Activated T-helper 1 cell treated with anti-CD3 and anti-CD28 coated beads, Interleukin-12 subunit alpha, Interleukin-12 subunit beta, Interleukin-2, Interleukin-4 antibody, amounts not matched to agents 30 ng/mL and 10 ng/mL and 1 ng/mL, durations not matched to agents 14 hours and 24 hours and 36 hours (primary cell): ENCODE measurements at regions of chr2 and their contacts with region 1.

Region 1: DNA sequence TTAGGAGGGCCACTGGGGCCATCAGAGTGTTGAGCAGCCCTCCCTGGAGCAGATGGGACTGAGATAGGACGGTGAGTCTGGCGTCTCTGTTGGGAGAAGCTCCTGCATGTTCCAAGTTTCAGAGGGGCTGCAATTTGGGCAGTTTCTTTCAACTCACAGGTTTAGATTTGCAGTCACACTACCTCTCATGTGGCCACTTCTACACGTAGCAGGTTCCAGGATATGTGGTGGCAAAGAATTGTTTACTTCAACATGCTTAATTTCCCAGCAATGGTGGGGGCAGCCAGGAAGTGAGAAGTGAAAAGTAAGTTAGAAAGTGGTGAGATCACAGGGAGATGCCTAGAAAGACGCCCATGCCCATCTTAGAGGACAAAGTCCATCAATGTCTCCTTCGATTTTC is 9.3 kb downstream of the NCK2 start:
- DNase-seq: peak; percentile 56
- H3K4me3 Mint-ChIP-seq: peak overlapping the region; percentile 60
- H3K27ac Mint-ChIP-seq: peak overlapping the region; percentile 83
- H3K4me1 Mint-ChIP-seq: peaks cover 97% of the 10 kb centered on the region
- H3K27me3 Mint-ChIP-seq: no peaks in the 10 kb centered on the region

Region 2: GRCh38 chr2:105454801-105455485 is 299.1 kb before region 1 on chr2:
- intact Hi-C with region 1: no loop called
- DNase-seq: no peak
- H3K4me3 Mint-ChIP-seq: no peak overlapping the region
- H3K27ac Mint-ChIP-seq: no peak overlapping the region
- H3K4me1 Mint-ChIP-seq: no peaks in the 10 kb centered on the region
- H3K27me3 Mint-ChIP-seq: peaks cover 3% of the 10 kb centered on the region

Region 3: GRCh38 chr2:105496271-105496670 is 257.7 kb before region 1 on chr2:
- intact Hi-C with region 1: no loop called
- DNase-seq: no peak
- H3K4me3 Mint-ChIP-seq: no peak overlapping the region
- H3K27ac Mint-ChIP-seq: no peak overlapping the region
- H3K4me1 Mint-ChIP-seq: no peaks in the 10 kb centered on the region
- H3K27me3 Mint-ChIP-seq: peaks cover 20% of the 10 kb centered on the region

Region 4: DNA sequence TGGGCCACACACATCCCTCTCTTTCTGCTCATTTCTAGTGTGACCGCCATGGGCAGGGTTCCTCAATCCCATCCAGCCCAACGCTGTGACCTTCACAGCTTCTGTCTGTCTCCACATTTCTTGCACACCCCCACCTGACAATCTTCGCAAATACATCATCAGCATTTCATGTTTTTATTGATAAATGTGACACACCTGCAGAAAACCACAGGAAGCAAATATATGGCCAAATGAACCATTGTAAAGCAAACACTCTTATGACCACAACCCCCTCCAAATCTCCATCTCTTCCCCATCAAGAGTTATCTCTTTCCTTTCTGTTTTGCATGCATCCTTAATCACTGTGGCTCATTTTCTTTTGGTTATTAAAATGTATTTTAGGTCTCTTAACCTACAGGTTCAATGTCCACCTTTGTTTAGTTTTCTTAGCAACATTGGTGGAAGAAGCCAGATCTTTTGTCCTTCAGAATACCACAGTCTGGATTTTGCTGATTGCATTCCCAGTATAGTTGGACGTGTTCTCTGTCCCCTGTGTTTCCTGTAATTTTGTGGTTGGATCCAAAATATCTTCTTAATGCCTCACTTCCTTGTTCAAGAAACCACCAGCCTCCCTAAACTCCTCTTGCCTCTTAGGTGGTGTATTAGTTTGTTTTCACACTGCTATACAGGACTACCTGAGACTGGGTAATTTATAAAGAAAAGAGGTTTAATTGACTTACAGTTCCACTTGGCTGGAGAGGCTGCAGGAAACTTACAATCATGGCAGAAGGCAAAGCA is 19.1 kb before region 1 on chr2:
- intact Hi-C with region 1: loop called (anchors 2 kb)
- DNase-seq: no peak
- H3K4me3 Mint-ChIP-seq: no peak overlapping the region
- H3K27ac Mint-ChIP-seq: no peak overlapping the region
- H3K4me1 Mint-ChIP-seq: peaks cover 42% of the 10 kb centered on the region
- H3K27me3 Mint-ChIP-seq: peaks cover 2% of the 10 kb centered on the region

Region 5: GRCh38 chr2:105769504-105769903 is 15.5 kb after region 1 on chr2:
- intact Hi-C with region 1: loop called (anchors 1 kb)
- DNase-seq: no peak
- H3K4me3 Mint-ChIP-seq: peak overlapping the region; percentile 34
- H3K27ac Mint-ChIP-seq: peak overlapping the region; percentile 64
- H3K4me1 Mint-ChIP-seq: peaks cover 91% of the 10 kb centered on the region
- H3K27me3 Mint-ChIP-seq: no peaks in the 10 kb centered on the region

Region 6: GRCh38 chr2:105775809-105776559 is 22.0 kb after region 1 on chr2:
- intact Hi-C with region 1: loop called (anchors 2 kb)
- DNase-seq: no peak
- H3K4me3 Mint-ChIP-seq: peak overlapping the region; percentile 55
- H3K27ac Mint-ChIP-seq: peak overlapping the region; percentile 81
- H3K4me1 Mint-ChIP-seq: peaks cover 90% of the 10 kb centered on the region
- H3K27me3 Mint-ChIP-seq: no peaks in the 10 kb centered on the region

Region 7: DNA sequence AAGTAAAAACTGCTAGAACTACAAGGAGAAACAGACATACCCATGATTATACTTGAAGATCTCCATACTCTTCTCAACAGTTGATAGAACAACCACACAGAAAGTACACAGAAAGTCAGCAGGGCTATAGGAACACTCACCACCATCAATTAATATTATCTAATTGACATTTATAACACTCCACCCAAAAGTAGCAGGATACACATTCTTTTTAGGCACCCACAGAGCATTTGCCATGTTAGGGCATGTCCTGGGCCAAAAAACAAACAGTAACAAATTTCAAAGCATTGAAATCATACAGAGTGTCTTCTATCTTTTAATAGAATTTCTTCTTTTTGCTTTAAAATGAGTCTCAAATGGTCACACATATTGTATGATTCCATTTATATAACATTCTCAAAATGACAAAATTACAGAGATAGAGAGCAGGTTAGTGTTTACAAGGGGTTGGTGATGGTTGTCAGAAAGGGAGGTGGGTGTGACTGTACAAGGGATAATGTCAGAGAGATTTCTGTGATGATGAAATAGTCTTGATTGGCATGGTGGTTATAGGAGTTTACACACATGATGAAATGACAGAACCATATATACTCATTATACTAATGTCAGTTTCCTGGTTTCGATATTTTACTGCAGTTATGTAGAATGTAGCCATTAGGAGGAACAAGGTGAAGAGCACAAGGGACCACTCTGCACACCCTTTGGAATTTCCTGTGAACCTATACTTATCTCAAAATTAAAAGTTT is 73.5 kb after region 1 on chr2:
- intact Hi-C with region 1: no loop called
- DNase-seq: no peak
- H3K4me3 Mint-ChIP-seq: no peak overlapping the region
- H3K27ac Mint-ChIP-seq: peak overlapping the region; percentile 13
- H3K4me1 Mint-ChIP-seq: peaks cover 85% of the 10 kb centered on the region
- H3K27me3 Mint-ChIP-seq: no peaks in the 10 kb centered on the region